ENCODE measurements at regions of chr14 and their contacts with region 1.

Region 1: DNA sequence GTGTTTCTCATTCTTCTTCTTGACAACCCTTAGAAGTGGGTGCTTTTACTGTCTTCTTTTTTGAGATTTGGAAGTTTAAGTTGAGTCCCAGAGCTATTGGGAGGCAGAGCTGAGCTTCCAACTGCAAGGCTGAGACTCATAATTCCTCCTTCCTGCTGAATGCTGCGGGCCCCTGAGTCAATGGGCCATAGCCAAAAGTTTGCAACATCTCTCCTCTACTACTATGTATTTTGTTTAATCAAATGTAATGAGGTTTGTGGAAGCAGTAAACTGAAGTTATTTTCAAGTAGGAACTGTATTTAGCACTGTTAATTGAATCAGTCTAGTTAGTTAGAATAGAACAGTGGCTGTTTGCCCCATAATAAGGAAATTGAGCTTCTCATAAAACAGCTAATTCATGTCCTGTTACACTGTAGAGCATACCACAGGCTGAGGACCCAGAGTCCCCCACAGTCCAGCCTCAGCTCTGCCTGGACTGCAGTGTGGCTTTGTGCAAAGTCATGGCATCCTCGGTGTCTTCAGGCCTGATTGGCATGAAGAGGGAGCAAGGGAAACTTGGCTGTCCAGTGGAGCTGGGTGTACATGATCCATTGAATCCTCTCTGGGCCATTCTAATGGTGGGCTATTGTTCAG is 631.7 kb downstream of the VRK1 start:
- DNase-seq: no peak
- ATAC-seq: no peak
- H3K4me3 Mint-ChIP-seq: no peak overlapping the region
- H3K27ac Mint-ChIP-seq: no peak overlapping the region
- H3K4me1 Mint-ChIP-seq: peaks cover 6% of the 10 kb centered on the region
- H3K27me3 Mint-ChIP-seq: no peaks in the 10 kb centered on the region; the same call in 1 of the 2 replicates
- CTCF ChIP-seq: no peak

Region 2: GRCh38 chr14:97264516-97265230 is 164.3 kb before region 1 on chr14:
- CTCF ChIA-PET with region 1: no interaction called
- POLR2A ChIA-PET with region 1: no interaction called
- DNase-seq: no peak
- ATAC-seq: no peak
- H3K4me3 Mint-ChIP-seq: no peak overlapping the region
- H3K27ac Mint-ChIP-seq: no peak overlapping the region
- H3K4me1 Mint-ChIP-seq: peaks cover 20% of the 10 kb centered on the region
- H3K27me3 Mint-ChIP-seq: no peaks in the 10 kb centered on the region; the same call in 1 of the 2 replicates
- CTCF ChIP-seq: no peak

Region 3: GRCh38 chr14:97490521-97491070 is 61.7 kb after region 1 on chr14:
- CTCF ChIA-PET with region 1: no interaction called
- POLR2A ChIA-PET with region 1: no interaction called
- DNase-seq: no peak
- ATAC-seq: no peak
- H3K4me3 Mint-ChIP-seq: no peak overlapping the region
- H3K27ac Mint-ChIP-seq: no peak overlapping the region
- H3K4me1 Mint-ChIP-seq: 0 out of 2 replicates have a peak, but pooled peaks cover 4% of the 10 kb centered on the region
- H3K27me3 Mint-ChIP-seq: peaks cover 2% of the 10 kb centered on the region; the same call in 1 of the 2 replicates
- CTCF ChIP-seq: no peak

Region 4: GRCh38 chr14:98742001-98742400 is 1313.1 kb after region 1 on chr14:
- CTCF ChIA-PET with region 1: no interaction called
- POLR2A ChIA-PET with region 1: interaction called, 12 read pairs
- DNase-seq: no peak
- ATAC-seq: no peak
- H3K4me3 Mint-ChIP-seq: no peak overlapping the region
- H3K27ac Mint-ChIP-seq: no peak overlapping the region
- H3K4me1 Mint-ChIP-seq: peaks cover 6% of the 10 kb centered on the region
- H3K27me3 Mint-ChIP-seq: no peaks in the 10 kb centered on the region
- CTCF ChIP-seq: no peak

Measured in WTC11 (cell line).